GM12878 (cell line): ENCODE measurements at regions of chr4 and their contacts with region 1.

Region 1: DNA sequence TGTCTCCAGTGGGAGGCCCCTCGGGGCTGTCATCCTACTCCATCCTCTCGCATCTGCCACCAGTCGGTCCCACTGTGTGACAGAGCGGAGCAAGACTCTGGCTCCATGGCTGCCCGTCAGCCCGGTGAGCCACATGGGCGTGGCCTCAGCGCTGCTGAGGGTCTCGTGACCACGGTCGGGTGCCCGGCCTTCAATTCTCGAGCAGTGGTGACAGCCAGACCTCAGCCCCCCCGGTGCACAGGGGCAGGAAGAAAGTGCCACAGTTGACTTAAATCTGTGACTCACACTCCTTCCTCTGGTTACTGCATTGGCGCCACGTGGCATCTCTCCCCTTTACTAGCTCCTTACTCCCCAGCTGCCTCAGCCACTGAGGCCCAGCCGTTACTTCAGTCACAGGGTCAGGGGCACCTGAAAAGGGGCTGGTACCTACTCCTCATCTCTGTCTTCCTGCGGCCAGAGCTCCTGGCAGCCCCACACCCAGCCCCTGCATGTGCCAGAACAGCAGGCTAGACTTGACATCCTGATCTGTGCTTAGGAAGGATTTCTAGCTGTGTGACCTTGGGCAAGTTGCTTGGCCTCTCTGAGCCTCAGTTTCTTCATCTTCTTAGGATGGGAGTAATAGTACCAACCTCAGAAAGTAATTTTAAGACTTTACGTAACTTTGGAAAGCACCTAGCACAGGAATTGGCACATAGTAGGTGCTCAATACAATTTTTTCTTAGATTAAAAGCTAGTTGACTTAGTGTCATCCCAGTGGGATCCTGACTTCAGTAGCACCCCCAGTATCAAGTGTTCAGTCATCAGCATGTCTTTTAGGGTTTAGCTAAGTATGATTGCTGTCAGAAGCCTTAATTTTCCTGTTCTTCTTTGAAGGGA is 66.1 kb downstream of the TNIP2 start:
- DNase-seq: peak; percentile 51
- ATAC-seq: peak; percentile 87
- H3K4me3 ChIP-seq: no peak overlapping the region
- H3K27ac ChIP-seq: peak overlapping the region; percentile 66
- H3K4me1 ChIP-seq: peaks cover 40% of the 10 kb centered on the region
- H3K27me3 ChIP-seq: no peaks in the 10 kb centered on the region
- CTCF ChIP-seq: no peak
- EP300 ChIP-seq: no peak
- POLR2A ChIP-seq: peak; percentile 57
- RAD21 ChIP-seq: no peak

Region 2: GRCh38 chr4:2412885-2413716 is 277.0 kb before region 1 on chr4:
- CTCF ChIA-PET with region 1: no interaction called
- POLR2A ChIA-PET with region 1: no interaction called
- RAD21 ChIA-PET with region 1: no interaction called
- SMC1A ChIA-PET with region 1: no interaction called
- in situ Hi-C with region 1: no loop called
- intact Hi-C with region 1: no loop called
- DNase-seq: peak; percentile 91
- ATAC-seq: peak; percentile 81
- H3K4me3 ChIP-seq: peak overlapping the region; percentile 58
- H3K27ac ChIP-seq: peak overlapping the region; percentile 60
- H3K4me1 ChIP-seq: peaks cover 49% of the 10 kb centered on the region
- H3K27me3 ChIP-seq: peaks cover 9 to 12% of the 10 kb centered on the region in 2 experiments
- CTCF ChIP-seq: peak in 2 of 3 experiments; percentile 31 to 42; a peak in 3 of 6 replicates
- EP300 ChIP-seq: peak; percentile 19 to 56; a peak in 1 of 4 replicates
- POLR2A ChIP-seq: no peak
- RAD21 ChIP-seq: no peak

Region 3: GRCh38 chr4:2673157-2673556 is 16.9 kb before region 1 on chr4:
- CTCF ChIA-PET with region 1: interaction called, 12 read pairs
- POLR2A ChIA-PET with region 1: interaction called, 3 read pairs
- RAD21 ChIA-PET with region 1: interaction called, 5 read pairs
- SMC1A ChIA-PET with region 1: interaction called, 7 read pairs
- in situ Hi-C with region 1: no loop called
- intact Hi-C with region 1: no loop called
- DNase-seq: no peak
- ATAC-seq: peak; percentile 45; the same call in 2 of the 3 replicates
- H3K4me3 ChIP-seq: no peak overlapping the region
- H3K27ac ChIP-seq: no peak overlapping the region
- H3K4me1 ChIP-seq: no peaks in the 10 kb centered on the region
- H3K27me3 ChIP-seq: no peaks in the 10 kb centered on the region
- CTCF ChIP-seq: peak; percentile 21 to 34 (median 31); a peak in 3 of 6 replicates
- EP300 ChIP-seq: no peak
- POLR2A ChIP-seq: no peak
- RAD21 ChIP-seq: 0 out of 2 replicates have a peak, but pooled peaks have one; percentile 20